ENCODE measurements at regions of chr17 and their contacts with region 1.

Region 1: DNA sequence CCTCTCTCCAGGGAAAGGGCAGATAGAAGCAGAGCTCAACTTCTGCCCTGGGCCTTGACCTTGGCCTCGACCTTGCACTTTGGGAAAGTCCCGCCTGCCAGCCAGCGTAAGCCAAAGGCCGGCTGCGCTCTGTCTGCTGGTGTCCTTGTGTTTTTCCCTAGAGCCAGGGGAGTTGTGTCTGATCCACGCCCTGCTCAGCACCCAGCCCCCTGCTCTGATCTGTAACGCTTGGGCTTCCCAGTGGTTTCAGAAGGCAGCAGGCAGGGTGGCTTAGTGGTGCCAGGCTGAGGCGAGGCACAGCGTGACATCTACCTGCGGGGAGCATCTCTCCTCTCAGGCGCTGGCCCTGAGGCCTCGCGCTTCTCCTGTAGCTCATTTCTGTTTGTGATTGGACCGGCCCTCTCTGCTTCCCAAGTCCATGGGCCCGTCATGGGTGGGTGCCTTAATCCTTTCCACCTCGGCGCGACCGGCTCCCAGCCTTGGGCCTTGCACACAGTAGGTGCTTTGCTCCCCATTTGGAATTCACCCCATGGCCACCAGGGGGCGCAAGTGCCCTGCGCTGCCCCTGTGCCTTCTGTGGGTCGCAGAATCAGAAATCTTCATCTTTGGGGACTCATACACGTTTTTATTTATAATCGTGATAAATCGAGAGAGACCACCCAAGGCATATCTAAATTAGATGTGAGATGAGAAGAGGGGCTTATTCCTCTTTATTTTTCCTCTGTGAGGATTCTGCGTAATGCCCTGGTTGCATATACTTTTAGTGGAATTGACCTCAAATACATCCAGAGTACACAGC is 24.2 kb downstream of the SGSH start:
- DNase-seq: peak; percentile 25 to 38 (median 29)
- H3K4me3 ChIP-seq: no peak overlapping the region
- H3K27ac ChIP-seq: no peak overlapping the region
- H3K4me1 ChIP-seq: peaks cover 0 to 9% (median 2%) of the 10 kb centered on the region in 4 experiments
- H3K27me3 ChIP-seq: peaks cover 0 to 12% (median 3%) of the 10 kb centered on the region in 5 experiments

Region 2: DNA sequence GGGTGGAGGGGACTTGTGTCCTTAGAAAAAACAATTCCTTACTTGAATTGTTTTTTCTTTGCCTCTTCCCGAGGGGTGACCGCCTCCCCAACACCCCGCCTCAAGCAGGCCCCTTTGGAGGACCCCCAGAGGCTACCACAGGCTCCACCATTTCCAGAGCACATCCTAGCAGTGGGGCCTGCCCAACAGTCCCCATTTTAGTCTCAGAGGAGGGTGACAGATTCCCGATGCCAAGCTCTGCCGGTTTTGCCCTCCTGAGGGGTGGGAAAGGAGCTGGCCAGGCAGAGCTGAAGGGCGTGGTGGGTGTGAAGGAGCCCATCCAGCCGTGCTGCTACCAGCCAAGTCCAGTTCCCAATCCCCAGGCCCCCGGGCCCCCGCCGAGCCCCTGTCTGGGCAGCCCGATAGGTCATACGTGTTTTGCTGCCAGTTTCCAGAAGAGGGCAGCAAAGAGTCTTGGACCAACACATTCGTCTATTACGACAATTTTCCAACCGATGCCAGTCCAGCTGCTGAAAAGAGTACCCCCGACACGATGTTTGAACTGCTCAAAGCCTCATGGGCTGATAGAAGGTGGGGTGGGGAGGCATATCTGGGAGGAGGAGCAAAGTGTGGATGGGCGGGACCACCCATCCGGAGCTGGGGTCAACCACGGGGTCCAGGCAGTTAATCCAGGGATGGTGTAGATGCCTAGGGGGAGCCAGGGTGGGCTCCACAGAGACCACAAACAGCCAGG is 113.4 kb before region 1 on chr17:
- CTCF ChIA-PET with region 1: no interaction called
- POLR2A ChIA-PET with region 1: no interaction called
- DNase-seq: peak; percentile 75 to 83 (median 80)
- H3K4me3 ChIP-seq: no peak overlapping the region
- H3K27ac ChIP-seq: no peak overlapping the region
- H3K4me1 ChIP-seq: peaks cover 0 to 4% (median 2%) of the 10 kb centered on the region in 4 experiments
- H3K27me3 ChIP-seq: peaks cover 0 to 5% (median 0%) of the 10 kb centered on the region in 5 experiments

Region 3: GRCh38 chr17:80252607-80253289 is 56.8 kb after region 1 on chr17:
- CTCF ChIA-PET with region 1: interaction called, 21 read pairs
- POLR2A ChIA-PET with region 1: interaction called, 3 read pairs
- DNase-seq: peak; percentile 75 to 83 (median 82)
- H3K4me3 ChIP-seq: no peak overlapping the region
- H3K27ac ChIP-seq: no peak overlapping the region
- H3K4me1 ChIP-seq: peaks cover 7 to 35% (median 26%) of the 10 kb centered on the region in 4 experiments
- H3K27me3 ChIP-seq: no peaks in the 10 kb centered on the region

Region 4: DNA sequence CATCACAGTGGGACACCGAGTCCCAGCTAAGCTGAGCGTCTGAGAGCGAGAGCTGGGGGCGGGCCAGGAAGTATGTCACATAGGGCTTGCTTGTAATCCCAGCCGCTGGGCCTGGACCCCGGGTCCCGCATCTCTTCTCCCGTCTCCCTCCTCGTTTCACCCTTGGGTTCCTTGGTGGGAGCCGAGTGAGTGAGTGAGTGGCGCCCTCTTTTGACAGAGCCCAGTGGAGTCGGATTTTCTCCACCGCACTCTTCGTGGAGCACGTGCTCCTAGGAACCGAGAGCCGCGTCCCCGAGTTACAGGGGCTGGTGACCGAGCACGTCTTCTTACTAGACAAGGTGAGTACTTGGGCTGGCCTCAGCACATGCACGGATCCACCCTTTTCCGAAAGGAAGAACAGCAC is 168.3 kb after region 1 on chr17:
- CTCF ChIA-PET with region 1: interaction called, 17 read pairs
- POLR2A ChIA-PET with region 1: no interaction called
- DNase-seq: peak; percentile 15 to 30 (median 16)
- H3K4me3 ChIP-seq: no peak overlapping the region
- H3K27ac ChIP-seq: no peak overlapping the region
- H3K4me1 ChIP-seq: no peaks in the 10 kb centered on the region
- H3K27me3 ChIP-seq: no peaks in the 10 kb centered on the region